MCF 10A (cell line): ENCODE measurements at regions of chr12 and their contacts with region 1.

Region 1: GRCh38 chr12:6470375-6471163 is at the start of gene VAMP1:
- DNase-seq: peak; percentile 96
- H3K4me3 Mint-ChIP-seq: peak within 1 kb of the TSS; percentile 72
- H3K27ac Mint-ChIP-seq: peak within 1 kb of the TSS; percentile 87
- H3K4me1 Mint-ChIP-seq: peaks cover 13% of the 10 kb centered on the region
- H3K27me3 Mint-ChIP-seq: no peaks in the 10 kb centered on the region
- CTCF ChIP-seq: no peak
- total RNA-seq, gene VAMP1: 2.5 and 2.9 TPM in 2 replicates

Region 2: DNA sequence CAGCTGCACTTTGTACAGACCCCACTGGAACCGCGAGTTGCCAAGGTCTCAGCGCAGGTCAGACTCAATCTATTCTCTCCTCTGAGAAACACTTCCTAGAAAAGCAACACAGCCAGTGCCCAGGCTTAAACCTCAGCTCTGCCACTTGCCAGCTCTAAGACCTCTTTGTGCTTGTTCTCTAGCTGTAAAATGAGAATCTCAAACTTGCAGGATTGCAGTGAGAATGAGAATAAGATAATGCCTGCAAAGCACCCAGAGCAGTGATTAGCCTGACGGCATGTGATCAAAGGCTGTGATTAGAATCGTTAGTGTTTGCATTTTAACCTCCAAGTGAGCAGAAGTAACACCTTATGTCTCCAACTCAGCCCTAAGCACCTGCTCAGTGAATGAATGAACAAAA is 546.8 kb before region 1 on chr12:
- CTCF ChIA-PET with region 1: no interaction called
- POLR2A ChIA-PET with region 1: no interaction called
- intact Hi-C with region 1: no loop called
- DNase-seq: no peak
- H3K4me3 Mint-ChIP-seq: no peak overlapping the region
- H3K27ac Mint-ChIP-seq: no peak overlapping the region
- H3K4me1 Mint-ChIP-seq: no peaks in the 10 kb centered on the region
- H3K27me3 Mint-ChIP-seq: no peaks in the 10 kb centered on the region
- CTCF ChIP-seq: no peak

Region 3: GRCh38 chr12:6195665-6196535 is 274.7 kb before region 1 on chr12:
- CTCF ChIA-PET with region 1: interaction called, 3 read pairs
- POLR2A ChIA-PET with region 1: no interaction called
- intact Hi-C with region 1: loop called (anchors 2 kb)
- DNase-seq: peak; percentile 92
- H3K4me3 Mint-ChIP-seq: no peak overlapping the region
- H3K27ac Mint-ChIP-seq: peak overlapping the region; percentile 61
- H3K4me1 Mint-ChIP-seq: peaks cover 27% of the 10 kb centered on the region
- H3K27me3 Mint-ChIP-seq: peaks cover 12% of the 10 kb centered on the region
- CTCF ChIP-seq: peak; percentile 88

Region 4: DNA sequence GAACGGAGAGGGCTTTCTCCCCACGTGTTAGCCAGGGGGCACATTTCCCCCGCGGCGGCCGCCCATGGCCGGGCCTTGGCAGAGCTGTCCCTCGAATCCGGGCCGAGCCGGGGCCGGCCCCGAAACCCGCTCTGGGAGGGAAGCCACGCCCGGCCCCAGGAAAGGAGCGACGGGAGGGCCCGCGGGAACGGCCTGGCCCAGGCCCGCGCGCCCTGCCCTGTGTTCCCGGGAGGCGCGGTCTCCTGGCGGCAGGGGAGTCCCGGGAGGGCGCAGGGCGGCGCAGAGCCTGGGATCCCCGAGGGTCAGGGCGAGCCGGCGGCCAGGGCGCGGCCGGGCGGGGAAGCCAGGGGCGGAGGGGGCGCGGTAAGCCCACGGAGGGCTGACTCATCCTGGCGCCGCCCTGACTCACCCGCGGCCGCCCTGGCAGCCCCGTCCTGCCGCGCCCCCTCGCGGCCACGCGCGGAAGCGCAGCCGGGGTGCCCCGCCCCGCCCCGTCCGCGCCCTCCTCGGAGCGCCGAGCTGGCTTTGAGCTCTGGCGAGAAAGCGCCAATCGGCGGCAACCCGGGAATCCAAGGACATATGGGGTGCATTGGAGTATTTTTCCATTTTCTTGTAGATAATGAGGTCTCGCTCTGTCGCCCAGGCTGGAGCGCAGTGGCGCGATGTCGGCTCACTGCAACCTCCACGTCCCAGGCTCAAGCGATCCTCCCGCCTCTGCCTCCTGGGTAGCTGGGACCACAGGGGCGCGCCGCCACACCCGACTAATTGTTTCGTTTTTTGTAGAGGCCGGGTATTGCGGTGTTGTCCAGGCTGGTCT is 191.9 kb before region 1 on chr12:
- CTCF ChIA-PET with region 1: no interaction called
- POLR2A ChIA-PET with region 1: no interaction called
- intact Hi-C with region 1: no loop called
- DNase-seq: peak; percentile 89
- H3K4me3 Mint-ChIP-seq: peak overlapping the region; percentile 66
- H3K27ac Mint-ChIP-seq: peak overlapping the region; percentile 92
- H3K4me1 Mint-ChIP-seq: peaks cover 44% of the 10 kb centered on the region
- H3K27me3 Mint-ChIP-seq: no peaks in the 10 kb centered on the region
- CTCF ChIP-seq: peak; percentile 94

Region 5: DNA sequence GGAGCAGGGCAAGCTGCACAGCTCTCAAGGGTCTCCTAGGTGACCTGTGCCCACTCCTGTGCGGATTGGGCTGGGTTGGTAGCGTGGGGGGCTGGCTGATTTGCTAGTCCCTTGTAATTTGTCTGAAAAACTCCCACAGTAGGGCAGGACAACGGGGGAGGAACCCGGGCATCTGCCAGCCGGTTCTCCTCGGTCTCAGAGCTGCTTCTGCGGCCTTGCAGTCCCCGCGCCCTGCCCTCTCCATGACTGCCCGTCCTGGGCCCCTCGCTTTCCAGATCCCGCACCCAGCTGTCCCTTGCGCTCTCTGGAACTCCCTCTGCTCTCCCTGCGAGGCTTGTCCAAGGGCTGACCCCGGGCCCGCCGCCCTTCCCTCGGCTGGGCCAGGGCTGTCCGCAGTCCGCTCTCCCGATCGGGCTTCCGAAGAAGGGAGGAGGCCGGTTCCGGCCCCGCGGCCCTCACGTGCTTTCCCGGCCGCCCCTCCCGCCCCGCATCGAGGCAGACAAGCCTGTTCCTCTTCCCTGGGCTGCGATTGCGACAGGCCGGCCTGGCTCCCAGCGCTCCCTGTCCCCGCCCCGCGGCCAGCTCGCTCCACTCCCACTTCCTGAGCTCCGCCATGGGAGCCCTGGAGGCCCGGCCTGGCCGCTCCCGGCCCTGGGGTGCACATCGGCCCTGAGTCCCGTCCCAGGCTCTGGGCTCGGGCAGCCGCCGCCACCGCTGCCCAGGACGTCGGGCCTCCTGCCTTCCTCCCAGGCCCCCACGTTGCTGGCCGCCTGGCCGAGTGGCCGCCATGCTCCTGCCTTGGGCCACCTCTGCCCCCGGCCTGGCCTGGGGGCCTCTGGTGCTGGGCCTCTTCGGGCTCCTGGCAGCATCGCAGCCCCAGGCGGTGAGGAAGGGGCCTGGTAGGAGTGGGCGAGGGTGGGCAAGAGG is 86.7 kb before region 1 on chr12 and contains the start of gene LTBR:
- CTCF ChIA-PET with region 1: interaction called, 4 read pairs
- POLR2A ChIA-PET with region 1: interaction called, 7 read pairs
- intact Hi-C with region 1: loop called (anchors 1 kb)
- DNase-seq: peak; percentile 96
- H3K4me3 Mint-ChIP-seq: peak within 1 kb of the TSS; percentile 94
- H3K27ac Mint-ChIP-seq: peak within 1 kb of the TSS; percentile 96
- H3K4me1 Mint-ChIP-seq: peaks cover 35% of the 10 kb centered on the region
- H3K27me3 Mint-ChIP-seq: no peaks in the 10 kb centered on the region
- CTCF ChIP-seq: no peak
- total RNA-seq, gene LTBR: 158 and 169 TPM in 2 replicates

Region 6: DNA sequence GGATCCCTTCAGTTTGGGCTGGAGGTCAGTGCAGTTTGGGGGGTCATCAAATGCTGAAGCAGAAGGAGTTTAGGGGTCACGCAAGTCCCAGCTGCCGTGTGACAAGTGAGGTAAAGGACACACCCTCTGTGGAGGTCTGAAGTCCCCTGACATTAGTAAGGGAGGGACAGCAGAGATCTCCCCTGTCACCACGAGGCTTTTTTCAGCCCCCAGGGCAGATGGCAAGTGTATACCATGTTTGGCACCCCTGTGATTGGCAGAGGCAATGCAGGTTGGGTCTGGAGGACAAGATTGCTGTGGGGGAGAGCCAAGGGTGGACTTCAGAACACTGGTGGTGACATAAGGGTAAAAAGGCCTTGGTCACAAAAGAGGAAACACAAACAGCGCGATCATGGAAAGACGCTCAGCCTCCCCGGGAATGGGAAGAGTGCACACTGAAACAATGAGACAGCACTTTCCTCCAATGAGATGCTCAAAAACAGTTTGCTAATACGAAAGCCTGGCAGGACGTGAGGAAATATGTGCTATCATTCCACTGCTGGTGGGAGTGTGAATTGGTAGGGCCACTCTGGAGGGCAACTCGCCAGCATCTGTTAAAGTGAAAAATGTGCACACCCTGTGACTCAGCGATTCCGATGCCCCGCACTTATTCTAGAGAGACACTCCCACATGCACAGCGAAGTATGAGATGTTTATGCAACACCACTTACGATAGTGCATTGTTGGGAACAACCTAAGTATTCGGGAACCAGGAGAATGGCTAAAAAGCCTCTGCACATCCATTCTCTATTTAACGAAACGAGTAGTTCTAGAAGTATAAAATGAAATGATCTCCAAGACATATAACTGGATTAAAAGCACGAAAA is 40.2 kb before region 1 on chr12:
- CTCF ChIA-PET with region 1: interaction called, 16 read pairs
- POLR2A ChIA-PET with region 1: interaction called, 14 read pairs
- intact Hi-C with region 1: no loop called
- DNase-seq: peak; percentile 99
- H3K4me3 Mint-ChIP-seq: peak overlapping the region; percentile 60
- H3K27ac Mint-ChIP-seq: peak overlapping the region; percentile 81
- H3K4me1 Mint-ChIP-seq: peaks cover 17% of the 10 kb centered on the region
- H3K27me3 Mint-ChIP-seq: no peaks in the 10 kb centered on the region
- CTCF ChIP-seq: no peak

Region 7: DNA sequence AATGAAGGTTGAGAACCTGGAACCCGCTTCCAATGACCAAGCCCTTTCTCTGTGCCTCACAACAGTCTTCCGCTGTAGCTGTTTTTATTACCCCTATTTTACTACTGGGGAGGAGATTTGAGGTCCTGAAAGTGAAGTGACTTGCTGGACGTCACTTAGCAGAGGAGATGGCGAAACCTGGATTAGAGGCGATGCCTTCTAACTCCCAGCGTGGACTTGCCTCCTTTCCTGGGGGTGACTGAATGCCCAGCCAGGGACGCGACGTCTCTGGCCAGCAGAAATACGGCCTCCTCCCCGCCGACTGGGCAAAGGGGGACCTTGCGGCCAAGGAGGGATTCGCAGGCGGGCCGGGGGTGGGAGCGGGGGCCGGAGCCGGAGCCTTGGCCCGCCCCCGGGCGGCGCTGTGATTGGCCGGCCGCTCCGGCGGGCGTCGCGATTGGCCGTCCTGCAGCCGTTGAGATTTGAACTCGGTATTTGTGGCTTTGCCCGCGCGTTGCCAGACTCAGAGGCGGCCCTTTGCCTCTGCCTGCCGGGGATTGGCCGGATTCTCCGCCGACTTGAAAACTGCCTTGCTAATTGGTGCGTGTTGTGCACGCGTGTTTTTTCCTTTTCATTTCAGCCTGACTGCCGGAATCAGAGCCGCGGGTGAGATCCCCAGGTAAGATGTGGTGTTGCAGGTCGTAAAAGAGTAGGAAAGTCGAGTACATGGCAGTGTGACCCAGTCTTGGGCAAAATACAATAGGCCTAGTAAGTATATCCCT is 23.1 kb after region 1 on chr12 and contains the start of gene NCAPD2:
- CTCF ChIA-PET with region 1: interaction called, 9 read pairs
- POLR2A ChIA-PET with region 1: interaction called, 59 read pairs
- intact Hi-C with region 1: no loop called
- DNase-seq: peak; percentile 96
- H3K4me3 Mint-ChIP-seq: peak within 1 kb of the TSS; percentile 95
- H3K27ac Mint-ChIP-seq: peak within 1 kb of the TSS; percentile 98
- H3K4me1 Mint-ChIP-seq: peaks cover 21% of the 10 kb centered on the region
- H3K27me3 Mint-ChIP-seq: no peaks in the 10 kb centered on the region
- CTCF ChIP-seq: no peak
- total RNA-seq, gene NCAPD2: 31.9 and 52.0 TPM in 2 replicates